GM18951 (cell line): ENCODE measurements at regions of chr10 and their contacts with region 1.

Region 1: DNA sequence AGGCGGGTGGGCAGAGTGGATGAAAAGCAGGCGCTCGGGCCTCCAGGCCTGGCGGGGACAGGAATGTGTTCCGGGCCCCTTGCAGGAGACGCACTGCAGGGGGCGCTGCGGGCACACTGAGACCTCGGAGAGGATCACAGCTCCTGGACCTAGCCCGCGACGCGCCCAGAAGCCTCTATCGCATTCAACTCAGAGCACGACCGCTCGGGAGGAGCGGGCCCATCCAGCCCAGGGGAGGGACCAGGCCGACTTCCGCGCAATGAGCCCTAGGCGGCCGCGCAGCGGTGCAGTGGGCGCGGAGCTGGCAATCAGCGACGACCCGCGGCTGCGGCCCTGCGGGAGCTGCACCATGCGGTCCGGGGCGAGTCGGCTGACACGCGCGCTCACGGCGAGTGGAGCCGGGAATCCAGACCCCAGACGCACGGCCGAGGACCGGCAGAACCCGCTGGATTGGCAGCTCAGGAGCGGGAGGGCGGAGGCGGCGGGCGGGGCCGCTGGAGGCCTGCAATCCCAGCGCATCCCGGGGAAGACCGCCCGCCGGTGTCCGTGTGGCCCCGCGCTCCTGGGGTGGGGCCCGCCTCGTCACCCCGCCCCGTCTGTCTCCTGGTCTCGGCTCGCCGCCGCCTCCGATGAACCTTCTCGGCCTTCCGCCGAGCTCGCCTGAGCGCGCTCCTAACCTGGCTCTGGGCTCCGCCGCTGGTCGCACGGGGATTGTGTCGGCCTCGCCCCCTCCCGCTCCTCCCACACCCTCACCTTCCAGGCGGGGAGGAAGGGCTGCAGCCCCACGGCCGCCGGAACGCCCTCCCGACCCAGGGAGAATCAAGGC is 33.5 kb upstream of the GRID1 start:
- POLR2A ChIP-seq: peak; percentile 56

Region 2: DNA sequence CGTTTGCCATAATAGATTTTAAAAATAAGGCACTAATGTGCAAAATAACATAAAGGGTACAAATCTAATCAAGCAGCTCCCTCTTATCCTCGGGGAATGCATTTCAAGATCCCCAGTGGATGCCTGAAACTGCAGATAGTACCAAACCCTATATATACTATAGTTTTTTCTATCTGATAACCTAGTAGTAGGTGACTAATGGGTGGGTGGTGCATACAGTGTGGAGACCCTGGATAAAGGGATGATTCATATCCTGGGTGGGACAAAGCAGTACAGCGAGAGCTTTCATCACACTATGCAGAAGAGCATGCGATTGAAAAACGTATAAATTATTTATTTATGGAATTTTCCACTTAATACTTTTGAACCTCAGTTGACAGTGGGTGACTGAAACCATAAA is 498.0 kb before region 1 on chr10:
- in situ Hi-C with region 1: no loop called
- POLR2A ChIP-seq: no peak

Region 3: GRCh38 chr10:86583994-86584393 is 183.9 kb after region 1 on chr10:
- in situ Hi-C with region 1: loop called (anchors 5 kb)
- POLR2A ChIP-seq: no peak